GM12878 (cell line): ENCODE measurements at regions of chr6 and their contacts with region 1.

Region 1: GRCh38 chr6:14876778-14877613 is 368.9 kb upstream of the JARID2 start:
- DNase-seq: peak; percentile 95
- ATAC-seq: peak; percentile 71
- H3K4me3 ChIP-seq: no peak overlapping the region; the same call in 1 of the 2 replicates
- H3K27ac ChIP-seq: peak overlapping the region; percentile 89
- H3K4me1 ChIP-seq: peaks cover 54% of the 10 kb centered on the region
- H3K27me3 ChIP-seq: no peaks in the 10 kb centered on the region
- CTCF ChIP-seq: no peak
- EP300 ChIP-seq: peak; percentile 61 to 89; a peak in 2 of 4 replicates
- POLR2A ChIP-seq: no peak
- RAD21 ChIP-seq: 0 out of 2 replicates have a peak, but pooled peaks have one; percentile 15

Region 2: DNA sequence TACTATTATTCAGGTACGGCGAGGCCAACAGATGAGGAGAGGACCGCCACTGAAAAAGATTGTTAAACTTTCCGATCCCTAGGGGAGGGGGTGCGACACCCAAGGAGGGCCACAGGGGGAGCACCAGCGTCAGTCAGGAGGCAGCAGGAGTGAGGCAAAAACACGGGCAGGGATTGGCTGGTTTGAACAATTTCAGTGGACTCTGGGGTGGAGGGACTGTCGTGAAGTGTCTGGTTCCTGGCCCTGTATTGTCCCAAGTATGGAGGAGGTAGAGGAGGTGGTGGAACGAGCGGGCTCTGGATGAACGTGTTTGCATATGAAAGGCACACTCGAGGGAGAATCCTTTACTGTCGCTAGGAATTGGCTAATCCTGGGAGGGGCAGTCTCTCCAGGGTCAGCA is 1030.2 kb before region 1 on chr6:
- CTCF ChIA-PET with region 1: no interaction called
- POLR2A ChIA-PET with region 1: no interaction called
- RAD21 ChIA-PET with region 1: no interaction called
- SMC1A ChIA-PET with region 1: no interaction called
- in situ Hi-C with region 1: no loop called
- intact Hi-C with region 1: no loop called
- DNase-seq: no peak
- ATAC-seq: no peak
- H3K4me3 ChIP-seq: no peak overlapping the region
- H3K27ac ChIP-seq: no peak overlapping the region
- H3K4me1 ChIP-seq: no peaks in the 10 kb centered on the region
- H3K27me3 ChIP-seq: no peaks in the 10 kb centered on the region
- CTCF ChIP-seq: 0 out of 6 replicates have a peak, but pooled peaks of 1 of the 3 experiments have one; percentile 11
- EP300 ChIP-seq: no peak
- POLR2A ChIP-seq: no peak
- RAD21 ChIP-seq: no peak

Region 3: DNA sequence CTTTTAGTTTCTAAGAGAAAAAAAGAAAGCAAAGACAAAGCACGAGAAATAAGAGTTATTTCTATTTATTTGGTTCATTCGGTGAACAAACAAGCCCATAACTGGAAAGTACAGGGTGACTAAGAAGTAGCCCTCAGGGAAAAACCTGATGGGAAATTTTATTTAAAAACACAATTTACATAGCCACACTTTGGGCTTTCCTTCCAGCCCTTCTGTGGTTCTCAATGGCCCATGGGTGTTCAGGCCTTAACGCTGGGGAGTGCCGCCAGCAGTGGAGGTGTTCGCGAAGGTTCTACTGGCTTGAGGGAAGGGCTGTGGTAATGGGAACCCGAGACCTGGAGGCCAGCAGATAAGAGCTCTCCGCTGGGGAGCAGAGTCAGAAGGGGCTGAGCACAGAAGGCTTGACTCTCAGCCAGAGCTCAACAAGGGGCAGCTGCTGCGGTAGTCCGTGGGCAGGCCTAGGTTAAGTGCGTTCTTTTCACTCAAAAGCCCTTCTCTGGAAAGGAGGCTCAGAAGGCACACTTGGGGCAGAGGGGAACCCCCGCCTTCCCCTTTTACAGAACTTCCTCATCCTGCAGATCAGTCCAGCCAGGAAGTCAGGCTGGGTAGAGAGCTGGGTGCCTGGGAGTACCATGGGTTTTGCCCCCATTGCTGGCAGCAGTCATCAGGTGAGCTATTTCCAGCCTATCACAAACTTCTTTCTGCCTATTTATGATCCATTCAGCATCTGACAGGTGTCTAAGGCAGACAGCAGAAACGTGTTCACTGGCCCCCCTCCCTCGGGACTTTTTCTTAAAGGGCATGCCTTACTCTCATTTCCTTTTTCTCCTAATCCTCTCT is 768.2 kb before region 1 on chr6:
- CTCF ChIA-PET with region 1: no interaction called
- POLR2A ChIA-PET with region 1: no interaction called
- RAD21 ChIA-PET with region 1: no interaction called
- SMC1A ChIA-PET with region 1: no interaction called
- in situ Hi-C with region 1: no loop called
- intact Hi-C with region 1: loop called (anchors 5 kb)
- DNase-seq: peak; percentile 97
- ATAC-seq: peak; percentile 82
- H3K4me3 ChIP-seq: peak overlapping the region; percentile 32; the same call in 1 of the 2 replicates
- H3K27ac ChIP-seq: peak overlapping the region; percentile 85
- H3K4me1 ChIP-seq: peaks cover 43% of the 10 kb centered on the region
- H3K27me3 ChIP-seq: no peaks in the 10 kb centered on the region
- CTCF ChIP-seq: no peak
- EP300 ChIP-seq: peak; percentile 46 to 66; a peak in 3 of 4 replicates
- POLR2A ChIP-seq: peak; percentile 59
- RAD21 ChIP-seq: no peak

Region 4: GRCh38 chr6:14841901-14842421 is 35.0 kb before region 1 on chr6:
- CTCF ChIA-PET with region 1: no interaction called
- POLR2A ChIA-PET with region 1: no interaction called
- RAD21 ChIA-PET with region 1: no interaction called
- SMC1A ChIA-PET with region 1: no interaction called
- in situ Hi-C with region 1: no loop called
- intact Hi-C with region 1: no loop called
- DNase-seq: no peak
- ATAC-seq: no peak
- H3K4me3 ChIP-seq: no peak overlapping the region
- H3K27ac ChIP-seq: no peak overlapping the region
- H3K4me1 ChIP-seq: no peaks in the 10 kb centered on the region
- H3K27me3 ChIP-seq: no peaks in the 10 kb centered on the region; a peak in 1 of 4 replicates
- CTCF ChIP-seq: no peak
- EP300 ChIP-seq: no peak
- POLR2A ChIP-seq: no peak
- RAD21 ChIP-seq: no peak

Region 5: DNA sequence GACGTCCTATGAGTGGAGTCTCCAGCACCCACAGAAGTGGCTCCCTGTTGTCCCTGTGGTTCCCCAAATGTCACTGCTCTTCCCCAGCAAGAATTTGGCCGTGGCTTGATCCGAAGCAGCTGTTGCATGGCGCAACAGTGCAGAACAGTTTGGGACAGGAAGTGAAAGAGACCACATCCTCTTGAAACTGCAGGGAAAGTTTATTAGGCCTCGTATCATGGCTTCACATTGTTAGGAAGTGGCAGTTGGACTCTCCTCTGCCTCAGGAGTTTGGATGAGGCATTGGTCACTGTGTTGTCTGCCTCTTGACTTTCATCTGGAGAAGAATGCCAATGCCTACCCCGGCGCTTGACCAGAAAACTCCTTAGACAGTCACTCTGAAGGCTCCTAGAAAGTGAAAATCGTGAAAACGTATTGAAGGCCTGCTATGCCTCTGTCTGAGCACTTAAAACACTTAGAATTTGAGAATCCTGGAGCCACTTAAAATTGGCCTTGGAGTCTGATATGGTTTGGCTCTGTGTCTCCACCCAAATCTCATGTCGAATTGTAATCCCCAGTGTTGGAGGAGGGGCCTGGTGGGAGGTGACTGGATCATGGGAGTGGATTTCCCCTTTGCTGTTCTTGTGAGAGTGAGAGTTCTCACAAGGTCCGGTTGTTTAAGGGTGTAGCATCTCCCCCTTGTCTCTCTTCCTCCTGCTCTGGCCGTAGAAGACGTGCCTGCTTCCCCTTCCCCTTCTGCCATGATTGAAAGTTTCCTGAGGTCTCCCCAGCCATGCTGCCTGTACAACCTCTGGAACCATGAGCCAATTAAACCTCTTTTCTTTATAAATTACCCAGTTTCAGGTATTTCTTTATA is 33.9 kb after region 1 on chr6:
- CTCF ChIA-PET with region 1: interaction called, 4 read pairs
- POLR2A ChIA-PET with region 1: no interaction called
- RAD21 ChIA-PET with region 1: interaction called, 5 read pairs
- SMC1A ChIA-PET with region 1: interaction called, 10 read pairs
- in situ Hi-C with region 1: no loop called
- intact Hi-C with region 1: loop called (anchors 1 kb)
- DNase-seq: peak; percentile 78
- ATAC-seq: peak; percentile 93
- H3K4me3 ChIP-seq: 0 out of 2 replicates have a peak overlapping the region, but pooled peaks have one; percentile 24
- H3K27ac ChIP-seq: peak overlapping the region; percentile 91
- H3K4me1 ChIP-seq: peaks cover 23% of the 10 kb centered on the region
- H3K27me3 ChIP-seq: no peaks in the 10 kb centered on the region
- CTCF ChIP-seq: no peak
- EP300 ChIP-seq: peak; percentile 28 to 94; a peak in 2 of 4 replicates
- POLR2A ChIP-seq: peak; percentile 43; the same call in 1 of the 2 replicates
- RAD21 ChIP-seq: peak; percentile 41; the same call in 1 of the 2 replicates

Region 6: GRCh38 chr6:15023448-15023847 is 146.5 kb after region 1 on chr6:
- CTCF ChIA-PET with region 1: interaction called, 5 read pairs
- POLR2A ChIA-PET with region 1: no interaction called
- RAD21 ChIA-PET with region 1: interaction called, 11 read pairs
- SMC1A ChIA-PET with region 1: interaction called, 17 read pairs
- in situ Hi-C with region 1: no loop called
- intact Hi-C with region 1: no loop called
- DNase-seq: peak; percentile 94
- ATAC-seq: peak; percentile 94
- H3K4me3 ChIP-seq: no peak overlapping the region
- H3K27ac ChIP-seq: peak overlapping the region; percentile 64
- H3K4me1 ChIP-seq: peaks cover 7% of the 10 kb centered on the region
- H3K27me3 ChIP-seq: no peaks in the 10 kb centered on the region
- CTCF ChIP-seq: no peak
- EP300 ChIP-seq: peak; percentile 92 to 93
- POLR2A ChIP-seq: no peak
- RAD21 ChIP-seq: peak; percentile 12; the same call in 1 of the 2 replicates

Region 7: DNA sequence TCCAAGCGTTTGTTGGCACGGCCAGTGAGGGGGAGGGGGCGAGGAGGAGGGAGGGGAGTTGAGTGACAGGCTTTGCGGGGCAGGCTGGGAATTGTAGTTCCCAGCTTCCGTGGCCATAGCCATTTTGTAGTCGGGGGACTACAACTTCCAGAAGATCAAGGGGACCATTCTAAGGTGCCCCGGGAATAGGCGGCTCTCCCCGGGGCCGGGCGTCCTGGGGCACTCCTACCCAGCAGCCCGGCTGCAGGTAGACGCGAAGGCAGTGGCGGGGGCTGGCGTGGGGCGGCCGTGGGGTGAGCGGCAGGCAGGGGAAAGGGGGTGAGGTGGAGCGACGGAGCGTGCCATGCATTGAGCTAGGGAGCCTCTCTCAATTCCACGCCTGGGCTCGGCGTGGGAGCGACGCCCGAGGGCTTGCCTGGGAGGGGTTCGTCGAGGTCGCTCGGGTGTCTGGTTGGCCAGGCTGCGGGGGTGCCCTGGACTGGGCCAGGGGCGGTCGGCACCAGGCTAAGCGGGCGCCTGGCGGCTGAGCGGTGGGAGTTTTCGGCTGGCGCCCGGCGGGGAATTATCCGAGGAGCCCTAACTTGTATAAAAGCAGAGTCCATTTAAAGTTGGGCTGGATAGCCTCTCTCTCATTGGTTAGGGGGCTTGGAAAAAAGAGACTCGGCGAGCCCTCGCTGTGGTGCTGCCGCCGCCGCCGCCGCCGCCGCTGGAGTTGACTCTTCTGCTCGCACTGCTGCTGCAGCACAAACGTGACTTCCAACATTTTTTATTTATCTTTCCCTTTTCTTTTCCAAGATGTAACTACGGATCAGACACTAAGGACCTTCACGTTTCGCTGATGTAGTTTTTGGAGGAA is 368.6 kb after region 1 on chr6 and contains the start of gene JARID2:
- CTCF ChIA-PET with region 1: interaction called, 3 read pairs
- POLR2A ChIA-PET with region 1: interaction called, 3 read pairs
- RAD21 ChIA-PET with region 1: no interaction called
- SMC1A ChIA-PET with region 1: interaction called, 3 read pairs
- in situ Hi-C with region 1: no loop called
- intact Hi-C with region 1: loop called (anchors 2 kb)
- DNase-seq: peak; percentile 91
- ATAC-seq: peak; percentile 72
- H3K4me3 ChIP-seq: peak within 1 kb of the TSS; percentile 97
- H3K27ac ChIP-seq: peak within 1 kb of the TSS; percentile 97
- H3K4me1 ChIP-seq: peaks cover under 1% of the 10 kb centered on the region; the same call in 1 of the 2 replicates
- H3K27me3 ChIP-seq: no peaks in the 10 kb centered on the region
- CTCF ChIP-seq: no peak
- EP300 ChIP-seq: 0 out of 4 replicates have a peak, but pooled peaks of 1 of the 2 experiments have one; percentile 14
- POLR2A ChIP-seq: peak; percentile 57; the same call in 1 of the 2 replicates
- RAD21 ChIP-seq: no peak
- polyA plus RNA-seq, gene JARID2: 4.2 to 5.2 TPM